Activated CD4-positive, alpha-beta T cell treated with anti-CD3 and anti-CD28 coated beads, Interleukin-2, amount 10 ng/mL, durations not matched to agents 24 days and 14 days (primary cell): ENCODE measurements at regions of chrX and their contacts with region 1.

Region 1: DNA sequence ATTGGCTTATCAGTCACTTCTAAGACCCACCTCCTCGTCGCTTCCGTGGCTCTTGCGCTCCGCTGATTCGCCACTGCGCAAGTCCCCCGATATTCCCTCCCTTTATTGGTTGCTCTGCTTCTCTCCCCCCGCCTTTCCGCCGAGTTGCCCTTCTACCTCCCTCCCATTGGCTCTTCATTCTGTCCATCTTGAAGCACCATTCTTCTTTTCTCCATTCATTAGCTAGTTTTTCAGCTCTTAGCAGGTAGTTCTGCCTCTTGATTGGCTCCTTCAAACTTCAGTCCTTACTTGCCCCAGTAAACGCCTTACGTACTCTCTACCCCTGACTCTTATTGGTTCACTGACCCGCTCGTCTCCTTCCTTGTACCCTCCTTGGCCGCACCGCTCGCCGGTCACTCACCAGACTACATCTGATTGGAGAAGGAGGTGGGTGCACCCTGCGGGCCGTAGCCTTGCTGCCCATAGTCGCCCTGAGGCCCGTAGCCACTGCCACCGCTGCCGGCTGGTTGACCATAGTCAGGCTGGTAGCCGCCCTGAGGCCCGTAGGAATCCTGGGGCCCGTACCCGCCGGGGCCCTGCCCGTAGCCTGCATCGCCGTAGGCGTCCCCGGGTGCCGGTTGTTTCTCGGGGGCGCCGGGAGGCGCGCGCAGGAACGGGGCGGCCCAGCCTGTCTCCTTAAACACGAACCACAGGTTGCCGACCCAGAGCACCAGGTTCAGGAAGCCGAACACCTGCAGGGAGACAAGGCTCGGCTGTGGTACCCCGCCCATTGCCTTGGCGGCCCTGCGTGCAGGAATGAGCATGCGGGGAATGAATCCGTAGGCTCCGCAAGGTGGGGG is 5.1 kb upstream of the PRICKLE3 start:
- DNase-seq: peak; percentile 95
- H3K4me3 Mint-ChIP-seq: peak overlapping the region; percentile 93
- H3K27ac Mint-ChIP-seq: peak overlapping the region; percentile 93
- H3K4me1 Mint-ChIP-seq: peaks cover 27% of the 10 kb centered on the region
- H3K27me3 Mint-ChIP-seq: no peaks in the 10 kb centered on the region

Region 2: GRCh38 chrX:49120099-49120498 is 71.2 kb before region 1 on chrX:
- intact Hi-C with region 1: loop called (anchors 1 kb)
- DNase-seq: peak; percentile 54
- H3K4me3 Mint-ChIP-seq: no peak overlapping the region
- H3K27ac Mint-ChIP-seq: peak overlapping the region; percentile 42
- H3K4me1 Mint-ChIP-seq: peaks cover 28% of the 10 kb centered on the region
- H3K27me3 Mint-ChIP-seq: no peaks in the 10 kb centered on the region

Region 3: DNA sequence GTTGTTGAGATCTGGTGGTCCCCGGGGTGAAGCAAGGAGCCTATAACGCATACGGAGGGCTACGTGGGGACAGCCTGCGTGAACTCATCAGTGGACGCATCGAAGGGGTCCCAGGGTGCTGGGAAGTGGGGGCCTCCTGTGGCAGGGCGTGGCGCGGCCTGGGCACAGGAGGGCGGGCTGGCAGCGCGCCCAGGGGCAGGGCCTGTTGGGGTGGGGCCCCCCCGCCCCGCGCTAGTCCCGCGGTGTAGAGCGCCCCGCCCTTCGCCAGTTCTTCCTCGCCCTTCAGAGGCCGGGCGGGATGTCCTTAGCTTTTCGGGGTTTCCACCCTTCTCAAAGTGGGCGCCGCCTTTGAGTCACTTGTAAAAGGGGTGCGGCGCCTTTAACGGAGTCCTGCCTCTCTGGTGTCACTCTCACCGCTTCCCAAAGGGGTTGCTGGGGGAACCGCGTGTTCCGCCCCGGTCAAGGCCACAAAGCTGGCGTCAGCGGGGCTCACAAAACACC is 18.9 kb before region 1 on chrX:
- intact Hi-C with region 1: loop called (anchors 2 kb)
- DNase-seq: peak; percentile 89
- H3K4me3 Mint-ChIP-seq: peak overlapping the region; percentile 90
- H3K27ac Mint-ChIP-seq: peak overlapping the region; percentile 91
- H3K4me1 Mint-ChIP-seq: peaks cover 24% of the 10 kb centered on the region
- H3K27me3 Mint-ChIP-seq: no peaks in the 10 kb centered on the region

Region 4: DNA sequence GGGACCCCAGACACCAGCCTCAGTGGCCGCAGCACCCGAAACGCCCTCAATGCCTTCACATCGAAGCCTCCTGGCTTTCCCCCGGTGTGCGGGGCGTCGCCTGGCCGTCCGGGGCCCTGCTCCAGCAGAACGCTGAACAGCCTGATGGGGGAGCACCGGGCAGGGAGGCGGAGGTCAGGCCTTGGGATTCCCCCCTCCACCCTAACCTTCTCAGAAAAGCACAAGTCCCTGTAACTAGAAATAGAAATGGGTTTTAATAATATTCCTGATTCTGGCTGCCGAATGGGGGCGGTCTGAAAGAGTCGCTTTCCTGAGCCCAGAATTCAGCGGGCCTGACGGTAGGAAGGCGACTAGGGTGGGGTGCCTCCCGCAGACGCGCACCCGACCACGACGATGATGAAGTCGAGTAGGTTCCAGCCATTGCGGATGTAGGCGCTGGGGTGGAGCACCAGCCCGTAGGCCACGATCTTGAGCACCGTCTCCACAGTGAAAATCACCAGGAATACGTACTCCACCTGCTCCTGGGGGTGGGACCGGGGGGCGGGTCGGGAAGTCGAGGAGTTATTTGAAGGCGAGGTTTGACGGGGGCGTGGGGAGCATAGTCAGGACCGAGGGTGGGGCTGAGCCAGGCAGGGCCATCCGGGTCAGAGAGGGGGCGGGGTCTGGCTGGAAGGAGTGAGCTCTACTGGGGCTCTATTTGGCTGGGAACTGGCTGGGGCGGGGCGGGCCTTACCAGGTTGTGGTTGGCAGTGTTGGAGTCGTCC is 39.4 kb after region 1 on chrX:
- intact Hi-C with region 1: loop called (anchors 1 kb)
- DNase-seq: peak; percentile 88
- H3K4me3 Mint-ChIP-seq: peak overlapping the region; percentile 80
- H3K27ac Mint-ChIP-seq: peak overlapping the region; percentile 89
- H3K4me1 Mint-ChIP-seq: peaks cover 15% of the 10 kb centered on the region
- H3K27me3 Mint-ChIP-seq: peaks cover 1% of the 10 kb centered on the region

Region 5: GRCh38 chrX:49291615-49292337 is 100.5 kb after region 1 on chrX:
- intact Hi-C with region 1: no loop called
- DNase-seq: peak; percentile 89
- H3K4me3 Mint-ChIP-seq: no peak overlapping the region
- H3K27ac Mint-ChIP-seq: no peak overlapping the region
- H3K4me1 Mint-ChIP-seq: peaks cover 16% of the 10 kb centered on the region
- H3K27me3 Mint-ChIP-seq: peaks cover 1% of the 10 kb centered on the region

Region 6: DNA sequence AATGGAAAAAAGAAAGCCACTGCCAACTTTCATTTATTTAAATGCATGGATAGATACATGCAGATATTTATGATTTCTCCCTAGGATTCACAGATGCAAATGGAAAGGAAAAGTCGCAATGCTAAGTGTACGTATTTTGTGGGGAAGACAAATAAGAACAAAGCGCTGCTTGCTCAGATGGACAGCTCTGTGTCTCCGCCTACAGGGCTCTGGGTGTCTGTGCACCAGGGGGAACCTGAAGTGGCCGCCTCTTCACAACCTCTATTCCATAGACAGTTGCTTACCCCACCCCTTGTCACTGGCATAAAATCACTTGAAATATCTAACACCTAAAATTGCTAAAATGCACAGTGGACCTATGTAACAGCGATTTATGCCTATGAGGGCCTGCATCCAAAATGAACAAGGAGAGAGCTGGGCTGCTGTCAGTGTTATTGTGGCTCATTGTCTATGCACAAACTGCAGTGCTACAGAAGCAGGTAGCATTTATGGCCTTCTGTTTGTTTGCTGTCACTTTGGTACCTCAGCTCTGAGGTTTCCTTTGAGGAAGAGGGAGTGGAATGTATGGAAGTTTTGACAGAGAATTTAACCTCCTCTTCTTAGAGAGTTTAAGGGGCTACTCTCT is 563.1 kb after region 1 on chrX:
- intact Hi-C with region 1: loop called (anchors 2 kb)
- DNase-seq: peak; percentile 82
- H3K4me3 Mint-ChIP-seq: no peak overlapping the region
- H3K27ac Mint-ChIP-seq: no peak overlapping the region
- H3K4me1 Mint-ChIP-seq: peaks cover 2% of the 10 kb centered on the region
- H3K27me3 Mint-ChIP-seq: peaks cover 29% of the 10 kb centered on the region